ENCODE measurements at regions of chr7 and their contacts with region 1.

Region 1: DNA sequence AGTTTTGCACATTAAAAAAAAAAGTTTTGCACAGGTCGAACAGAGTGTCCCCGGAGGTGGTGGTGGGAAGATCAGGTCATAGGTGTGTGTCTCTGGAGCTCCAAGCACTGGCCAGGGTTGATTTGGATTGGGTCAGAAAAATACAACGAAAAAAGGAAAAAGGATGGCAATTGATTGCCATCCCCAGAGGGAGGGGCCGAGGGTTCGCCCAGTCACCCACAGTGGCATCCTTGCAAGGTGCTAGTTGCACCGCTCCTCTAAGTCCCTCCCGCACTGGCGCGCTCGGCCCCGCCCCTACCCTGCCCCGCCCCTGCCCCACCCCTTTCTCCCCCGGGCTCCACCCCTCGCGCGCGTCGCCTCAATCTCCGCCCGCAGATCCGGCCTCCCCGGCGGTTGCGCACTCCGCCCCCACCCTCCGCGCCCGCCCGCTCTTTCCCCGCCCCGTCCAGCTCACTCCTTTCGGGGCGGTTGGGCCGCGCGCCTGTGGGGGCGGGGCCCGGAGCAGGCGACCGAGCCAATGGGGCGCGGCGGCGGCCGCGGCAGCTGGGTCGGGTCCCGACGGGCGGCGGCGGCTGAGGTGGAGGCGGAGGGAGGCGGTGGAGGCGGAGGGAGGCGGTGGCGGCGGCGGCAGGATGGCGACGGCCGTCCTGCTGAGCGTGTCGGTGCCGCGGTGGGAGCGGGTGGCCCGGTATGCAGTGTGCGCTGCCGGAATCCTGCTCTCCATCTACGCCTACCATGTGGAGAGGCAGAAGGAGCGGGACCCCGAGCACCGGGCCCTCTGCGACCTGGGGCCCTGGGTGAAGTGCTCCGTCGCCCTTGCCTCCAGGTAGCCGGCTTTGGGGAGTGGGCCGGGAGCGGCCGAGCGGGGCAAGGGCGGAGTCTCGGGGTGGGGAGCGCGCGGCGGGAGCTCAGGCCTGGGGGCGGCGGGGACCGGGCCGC is 31.5 kb upstream of the ERV3-1 start:
- DNase-seq: peak; percentile 83
- H3K4me3 Mint-ChIP-seq: peak overlapping the region; percentile 79
- H3K27ac Mint-ChIP-seq: peak overlapping the region; percentile 73
- H3K4me1 Mint-ChIP-seq: peaks cover 16% of the 10 kb centered on the region
- H3K27me3 Mint-ChIP-seq: no peaks in the 10 kb centered on the region

Region 2: GRCh38 chr7:64562626-64563275 is 475.3 kb before region 1 on chr7 and contains the start of gene ZNF680:
- intact Hi-C with region 1: loop called (anchors 5 kb)
- DNase-seq: peak; percentile 85
- H3K4me3 Mint-ChIP-seq: peak within 1 kb of the TSS; percentile 99
- H3K27ac Mint-ChIP-seq: peak within 1 kb of the TSS; percentile 98
- H3K4me1 Mint-ChIP-seq: peaks cover 18% of the 10 kb centered on the region
- H3K27me3 Mint-ChIP-seq: no peaks in the 10 kb centered on the region
- total RNA-seq, gene ZNF680: 8.5 and 12.2 TPM in 2 replicates

Region 3: DNA sequence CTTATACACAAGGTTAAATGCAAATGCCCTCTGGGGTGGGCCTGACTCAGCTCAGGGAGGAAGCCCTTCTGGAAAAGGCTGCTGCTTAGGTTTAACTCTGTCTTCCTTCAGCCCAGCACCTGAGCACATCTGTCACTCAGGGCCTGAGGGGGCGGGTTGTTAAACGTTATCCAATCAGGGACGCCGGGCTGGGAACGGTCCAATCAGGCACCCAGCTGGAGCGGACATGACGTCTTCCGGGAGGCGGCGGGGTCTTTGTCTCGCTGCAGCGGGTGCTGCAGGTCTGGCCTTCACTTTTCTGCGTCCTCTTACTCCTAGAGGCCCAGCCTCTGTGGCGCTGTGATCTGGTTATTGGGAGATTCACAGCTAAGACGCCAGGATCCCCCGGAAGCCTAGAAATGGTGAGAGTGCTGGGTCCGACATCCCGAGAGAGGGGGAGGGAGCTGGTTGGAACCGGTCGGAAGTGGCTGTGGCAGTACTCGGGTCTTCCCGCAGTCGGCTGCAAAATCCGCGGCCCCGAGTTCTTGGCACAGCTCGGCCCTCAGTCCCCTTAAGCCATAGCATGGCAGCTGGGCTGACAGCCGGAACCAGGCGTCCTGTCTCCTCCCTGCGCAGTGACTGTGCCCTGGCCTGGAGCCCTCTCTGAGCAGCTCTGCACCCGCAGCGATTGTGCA is 243.7 kb before region 1 on chr7 and contains the start of gene ZNF138:
- intact Hi-C with region 1: loop called (anchors 1 kb)
- DNase-seq: peak; percentile 90
- H3K4me3 Mint-ChIP-seq: peak within 1 kb of the TSS; percentile 98
- H3K27ac Mint-ChIP-seq: peak within 1 kb of the TSS; percentile 98
- H3K4me1 Mint-ChIP-seq: peaks cover 21% of the 10 kb centered on the region
- H3K27me3 Mint-ChIP-seq: no peaks in the 10 kb centered on the region
- total RNA-seq, gene ZNF138: 7.7 and 7.9 TPM in 2 replicates

Region 4: DNA sequence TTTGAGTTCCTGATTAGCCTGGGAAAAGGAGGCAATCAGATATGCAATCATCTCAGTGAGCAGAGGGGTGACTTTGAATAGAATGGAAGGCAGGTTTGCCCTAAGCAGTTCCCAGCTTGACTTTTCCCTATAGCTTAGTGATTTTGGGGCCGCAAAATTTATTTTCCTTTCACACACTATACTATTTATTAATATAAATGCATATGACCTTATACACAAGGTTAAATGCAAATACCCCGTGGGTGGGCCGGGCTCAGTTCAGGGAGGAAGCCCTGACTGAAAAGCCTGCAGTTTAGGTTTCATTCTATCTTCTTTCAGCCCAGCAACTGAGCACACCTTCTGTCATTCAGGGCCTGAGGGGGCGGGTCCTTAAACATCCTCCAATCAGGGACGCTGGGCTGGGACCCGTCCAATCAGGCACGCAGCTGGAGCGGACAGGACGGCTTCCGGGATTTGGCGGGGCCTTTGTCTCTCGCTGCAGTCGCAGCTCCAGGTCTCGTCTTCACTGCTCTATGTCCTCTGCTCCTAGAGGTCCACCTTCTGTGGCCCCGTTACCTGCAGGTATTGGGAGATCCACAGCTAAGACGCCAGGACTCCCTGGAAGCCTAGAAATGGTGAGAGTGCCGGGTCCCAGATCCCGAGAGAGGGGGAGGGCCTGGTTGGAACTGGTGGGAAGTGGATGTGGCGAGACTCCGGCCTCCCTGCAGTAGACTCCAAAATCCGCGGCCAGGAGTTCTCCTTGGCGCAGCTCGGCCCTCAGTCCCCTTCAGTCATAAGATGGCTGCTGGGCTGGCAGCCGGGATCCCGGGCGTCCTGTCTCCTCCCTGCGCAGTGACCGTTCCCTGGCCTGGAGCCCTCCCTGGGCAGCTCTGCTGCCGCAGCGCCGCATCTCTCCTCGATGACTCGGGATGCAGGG is 134.9 kb before region 1 on chr7 and contains the start of gene ZNF273:
- intact Hi-C with region 1: loop called (anchors 1 kb)
- DNase-seq: peak; percentile 87
- H3K4me3 Mint-ChIP-seq: peak within 1 kb of the TSS; percentile 98
- H3K27ac Mint-ChIP-seq: peak within 1 kb of the TSS; percentile 93
- H3K4me1 Mint-ChIP-seq: peaks cover 29% of the 10 kb centered on the region
- H3K27me3 Mint-ChIP-seq: no peaks in the 10 kb centered on the region
- total RNA-seq, gene ZNF273: 8.5 and 9.3 TPM in 2 replicates

Region 5: GRCh38 chr7:64951250-64951848 is 86.7 kb before region 1 on chr7:
- intact Hi-C with region 1: loop called (anchors 5 kb)
- DNase-seq: no peak
- H3K4me3 Mint-ChIP-seq: no peak overlapping the region
- H3K27ac Mint-ChIP-seq: no peak overlapping the region
- H3K4me1 Mint-ChIP-seq: no peaks in the 10 kb centered on the region
- H3K27me3 Mint-ChIP-seq: peaks cover 33% of the 10 kb centered on the region

Region 6: DNA sequence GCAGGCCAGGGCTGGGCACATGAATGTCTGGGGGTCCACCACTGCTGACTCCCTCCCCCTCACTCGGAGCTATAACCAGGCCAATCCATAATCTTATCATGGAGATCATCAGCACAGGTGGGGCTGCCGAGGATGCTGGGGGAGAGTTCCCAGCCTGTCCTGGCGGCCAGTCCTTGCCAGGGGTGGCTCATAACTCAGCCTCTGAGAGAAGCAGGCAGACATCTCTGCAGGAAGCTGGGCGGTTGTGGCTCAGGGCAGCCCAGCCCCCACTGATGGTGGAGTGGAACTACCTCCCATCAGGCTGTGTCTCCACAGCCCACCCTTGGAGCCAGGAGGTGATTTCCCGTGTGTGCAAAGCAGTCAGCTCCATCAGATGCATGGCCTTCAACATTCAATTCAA is 226.2 kb after region 1 on chr7:
- intact Hi-C with region 1: no loop called
- DNase-seq: no peak
- H3K4me3 Mint-ChIP-seq: no peak overlapping the region
- H3K27ac Mint-ChIP-seq: no peak overlapping the region
- H3K4me1 Mint-ChIP-seq: peaks cover 4% of the 10 kb centered on the region
- H3K27me3 Mint-ChIP-seq: peaks cover 11% of the 10 kb centered on the region